ENCODE measurements at regions of chr11 and their contacts with region 1.

Region 1: GRCh38 chr11:45193695-45194094 is 47.3 kb downstream of the PRDM11 start:
- DNase-seq: no peak
- H3K4me3 ChIP-seq: no peak overlapping the region
- H3K27ac ChIP-seq: no peak overlapping the region
- H3K4me1 ChIP-seq: no peaks in the 10 kb centered on the region
- H3K27me3 ChIP-seq: no peaks in the 10 kb centered on the region
- CTCF ChIP-seq: no peak
- EP300 ChIP-seq: no peak
- RAD21 ChIP-seq: no peak

Region 2: DNA sequence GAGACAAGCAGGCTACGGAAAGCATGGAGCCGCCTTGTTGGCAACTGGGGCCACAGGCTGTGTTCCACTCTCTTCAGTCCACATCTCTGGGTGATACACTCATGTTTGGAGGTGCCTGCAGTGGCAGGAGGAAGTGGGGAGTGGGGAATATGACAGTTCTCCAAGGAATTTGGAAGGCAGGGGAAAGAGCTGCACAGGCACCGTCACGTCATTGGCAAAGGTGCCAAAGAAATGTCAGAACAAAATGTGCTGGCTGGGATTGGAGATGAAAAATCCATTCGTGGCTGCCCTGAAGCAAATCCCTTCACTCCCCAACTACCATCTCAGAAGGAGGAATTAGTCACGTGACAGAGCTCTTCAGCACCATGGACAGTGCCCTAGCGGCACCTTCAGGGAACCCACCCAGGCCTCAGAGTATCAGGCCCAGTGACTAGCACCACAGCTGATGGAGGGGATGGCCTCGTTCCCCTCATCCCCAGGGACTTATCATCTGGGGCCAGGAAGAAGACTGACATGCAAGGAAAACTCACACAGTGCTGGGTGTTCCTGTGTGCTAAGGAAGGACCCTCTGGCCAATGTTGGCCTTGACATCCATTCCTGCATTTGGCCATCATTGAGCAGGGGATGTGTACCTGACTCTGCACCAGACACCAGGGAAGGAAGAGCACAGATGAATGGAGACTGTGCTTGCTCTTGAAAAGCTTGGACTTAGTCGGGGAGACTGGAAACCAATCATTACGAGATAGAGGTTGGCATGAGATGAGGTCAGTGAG is 95.8 kb before region 1 on chr11:
- CTCF ChIA-PET with region 1: no interaction called
- POLR2A ChIA-PET with region 1: no interaction called
- DNase-seq: peak; percentile 6
- H3K4me3 ChIP-seq: no peak overlapping the region
- H3K27ac ChIP-seq: no peak overlapping the region
- H3K4me1 ChIP-seq: peaks cover 0 to 4% of the 10 kb centered on the region in 2 experiments; a peak in 2 of 4 replicates
- H3K27me3 ChIP-seq: peaks cover 19% of the 10 kb centered on the region; the same call in 1 of the 2 replicates
- CTCF ChIP-seq: no peak
- EP300 ChIP-seq: no peak
- RAD21 ChIP-seq: no peak

Region 3: GRCh38 chr11:45182902-45183301 is 10.8 kb before region 1 on chr11:
- CTCF ChIA-PET with region 1: interaction called, 10 read pairs
- POLR2A ChIA-PET with region 1: no interaction called
- DNase-seq: peak; percentile 46
- H3K4me3 ChIP-seq: no peak overlapping the region
- H3K27ac ChIP-seq: no peak overlapping the region
- H3K4me1 ChIP-seq: peaks cover 7 to 13% of the 10 kb centered on the region in 2 experiments; a peak in 2 of 4 replicates
- H3K27me3 ChIP-seq: no peaks in the 10 kb centered on the region
- CTCF ChIP-seq: peak; percentile 61
- EP300 ChIP-seq: no peak
- RAD21 ChIP-seq: no peak; the same call in 1 of the 2 replicates

Region 4: DNA sequence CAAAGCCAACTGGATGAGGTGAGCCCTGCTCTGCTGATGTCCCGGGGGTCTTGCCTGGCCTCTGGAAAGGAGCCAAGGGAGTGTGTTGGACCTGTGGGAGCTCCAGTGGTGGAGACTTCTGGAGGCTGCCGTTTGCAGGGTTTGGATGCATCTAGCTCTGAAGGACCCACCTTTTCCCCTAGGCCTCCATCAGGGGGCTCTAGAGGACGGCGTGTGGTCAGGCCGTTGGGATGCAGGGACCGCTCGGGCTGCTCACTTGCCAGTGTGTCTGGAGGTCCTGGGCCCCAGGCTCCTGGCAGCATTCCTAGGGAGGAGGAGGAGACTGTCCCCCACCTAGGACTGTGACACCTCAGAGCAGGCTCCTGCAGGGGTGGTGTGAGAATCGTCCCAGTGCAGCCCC is 11.1 kb after region 1 on chr11:
- CTCF ChIA-PET with region 1: no interaction called
- POLR2A ChIA-PET with region 1: no interaction called
- DNase-seq: no peak
- H3K4me3 ChIP-seq: no peak overlapping the region
- H3K27ac ChIP-seq: no peak overlapping the region
- H3K4me1 ChIP-seq: no peaks in the 10 kb centered on the region; a peak in 2 of 4 replicates
- H3K27me3 ChIP-seq: no peaks in the 10 kb centered on the region
- CTCF ChIP-seq: no peak
- EP300 ChIP-seq: no peak
- RAD21 ChIP-seq: no peak

Region 5: GRCh38 chr11:45259592-45259991 is 65.9 kb after region 1 on chr11:
- CTCF ChIA-PET with region 1: no interaction called
- POLR2A ChIA-PET with region 1: no interaction called
- DNase-seq: no peak
- H3K4me3 ChIP-seq: no peak overlapping the region
- H3K27ac ChIP-seq: peak overlapping the region in 1 of 2 experiments; percentile 10; a peak in 2 of 4 replicates
- H3K4me1 ChIP-seq: no peaks in the 10 kb centered on the region; a peak in 1 of 4 replicates
- H3K27me3 ChIP-seq: no peaks in the 10 kb centered on the region
- CTCF ChIP-seq: no peak
- EP300 ChIP-seq: no peak
- RAD21 ChIP-seq: no peak

Measured in SK-N-SH (cell line).